Posterior cingulate gyrus (tissue), 11 donors: ENCODE measurements at regions of chr11 and their contacts with region 1.

Region 1: DNA sequence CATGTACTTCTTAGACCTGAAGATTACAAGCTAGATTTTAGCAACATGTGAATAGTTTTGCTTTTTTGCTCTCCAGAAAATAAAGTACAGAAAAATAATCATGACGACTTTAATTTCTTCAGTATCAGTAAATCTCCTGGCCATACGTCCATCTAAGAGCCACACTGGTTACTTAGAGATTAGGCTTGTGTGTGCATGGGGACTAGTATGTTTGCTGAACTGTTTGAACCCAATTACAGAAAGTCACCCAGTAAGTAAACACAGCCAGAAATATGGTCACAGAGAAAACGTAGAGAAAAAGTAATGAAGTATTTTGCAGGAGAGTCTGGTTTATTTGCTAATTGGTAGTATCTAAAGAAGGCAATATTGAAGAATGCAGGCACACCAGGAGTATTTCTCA is 1053.6 kb upstream of the CCDC90B start:
- DNase-seq: no peak

Region 2: GRCh38 chr11:84372381-84372950 is 32.7 kb after region 1 on chr11:
- intact Hi-C with region 1: loop called (anchors 5 kb)
- DNase-seq: no peak